Stomach (tissue), 19 donors: ENCODE measurements at regions of chr1 and their contacts with region 1.

Region 1: GRCh38 chr1:156465747-156466365 is 34.7 kb downstream of the MEF2D start:
- DNase-seq: no peak
- H3K4me3 ChIP-seq: no peak overlapping the region
- H3K27ac ChIP-seq: peak overlapping the region; percentile 27 to 97 (median 60)
- H3K4me1 ChIP-seq: peaks cover 44 to 90% (median 75%) of the 10 kb centered on the region in 4 donors
- H3K27me3 ChIP-seq: no peaks in the 10 kb centered on the region
- CTCF ChIP-seq: no peak
- EP300 ChIP-seq: no peak
- POLR2A ChIP-seq: no peak

Region 2: GRCh38 chr1:156601122-156601830 is 135.4 kb after region 1 on chr1 and contains the start of gene GPATCH4:
- intact Hi-C with region 1: loop called (anchors 10 kb)
- DNase-seq: peak; percentile 70 to 93
- H3K4me3 ChIP-seq: peak within 1 kb of the TSS; percentile 69 to 91 (median 70)
- H3K27ac ChIP-seq: peak within 1 kb of the TSS; percentile 66 to 88 (median 76)
- H3K4me1 ChIP-seq: peaks cover 13 to 28% (median 23%) of the 10 kb centered on the region in 4 donors
- H3K27me3 ChIP-seq: no peaks in the 10 kb centered on the region
- CTCF ChIP-seq: no peak
- EP300 ChIP-seq: no peak
- POLR2A ChIP-seq: no peak
- total RNA-seq, gene GPATCH4: 9.0 to 15.6 (median 12.9) TPM